ENCODE measurements at regions of chr1 and their contacts with region 1.

Region 1: GRCh38 chr1:23959041-23959460 is 577 bp upstream of the PNRC2 start:
- DNase-seq: peak; percentile 97
- ATAC-seq: peak; percentile 83
- H3K4me3 Mint-ChIP-seq: peak overlapping the region; percentile 100
- H3K27ac Mint-ChIP-seq: peak overlapping the region; percentile 100
- H3K4me1 Mint-ChIP-seq: peaks cover 66% of the 10 kb centered on the region
- H3K27me3 Mint-ChIP-seq: no peaks in the 10 kb centered on the region

Region 2: GRCh38 chr1:23743287-23744052 is 215.6 kb before region 1 on chr1 and contains the start of gene ELOA:
- CTCF ChIA-PET with region 1: no interaction called
- POLR2A ChIA-PET with region 1: interaction called, 10 read pairs
- DNase-seq: peak; percentile 85
- ATAC-seq: peak; percentile 94
- H3K4me3 Mint-ChIP-seq: peak within 1 kb of the TSS; percentile 93
- H3K27ac Mint-ChIP-seq: peak within 1 kb of the TSS; percentile 90
- H3K4me1 Mint-ChIP-seq: peaks cover 45% of the 10 kb centered on the region
- H3K27me3 Mint-ChIP-seq: no peaks in the 10 kb centered on the region
- total RNA-seq, gene ELOA: 29.2 to 31.0 TPM

Region 3: DNA sequence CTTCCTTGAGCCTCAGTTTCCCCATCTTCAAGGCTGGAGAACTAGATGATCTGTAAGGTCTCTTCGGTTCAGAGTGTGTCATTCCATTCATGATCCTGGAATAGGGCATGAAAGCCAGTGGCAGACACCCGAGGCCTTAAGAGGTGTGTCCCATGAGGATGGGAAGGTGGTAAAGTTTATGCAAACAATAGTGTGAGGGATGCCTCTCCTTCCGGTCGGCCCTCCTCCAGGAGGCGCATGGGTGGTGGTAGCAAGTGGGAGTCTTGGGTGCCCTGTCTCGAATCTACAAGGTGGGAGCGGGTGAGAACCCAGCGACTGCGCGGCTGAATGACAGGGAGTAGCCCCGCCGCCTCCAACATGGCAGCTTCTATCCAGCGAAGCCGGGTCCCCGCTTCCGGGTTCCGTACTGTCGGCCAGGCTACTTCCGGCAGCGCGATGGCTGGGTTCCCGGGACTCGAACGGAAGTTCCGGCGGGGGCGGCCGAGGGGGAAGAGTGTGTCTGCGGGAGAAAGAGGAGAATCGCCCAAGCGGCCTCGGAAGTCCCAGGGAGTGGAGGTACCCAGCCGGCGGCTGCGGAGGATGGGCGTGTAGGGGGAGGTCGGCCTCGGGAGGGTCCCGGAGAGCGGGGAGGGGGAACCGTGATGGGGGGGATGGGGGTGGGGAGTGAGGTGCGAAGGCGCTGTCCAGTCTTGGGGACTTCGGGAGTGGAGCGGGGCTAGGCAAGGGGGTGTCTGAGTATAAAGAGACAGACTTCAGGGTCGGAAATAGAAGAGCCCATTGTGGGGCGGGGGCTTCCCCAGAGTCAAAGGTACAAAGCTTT is 168.1 kb before region 1 on chr1 and contains the start of gene LYPLA2:
- CTCF ChIA-PET with region 1: no interaction called
- POLR2A ChIA-PET with region 1: interaction called, 10 read pairs
- DNase-seq: peak; percentile 92
- ATAC-seq: peak; percentile 90
- H3K4me3 Mint-ChIP-seq: peak within 1 kb of the TSS; percentile 95
- H3K27ac Mint-ChIP-seq: peak within 1 kb of the TSS; percentile 97
- H3K4me1 Mint-ChIP-seq: peaks cover 36% of the 10 kb centered on the region
- H3K27me3 Mint-ChIP-seq: no peaks in the 10 kb centered on the region
- total RNA-seq, gene LYPLA2: 84.2 to 88.2 TPM

Region 4: DNA sequence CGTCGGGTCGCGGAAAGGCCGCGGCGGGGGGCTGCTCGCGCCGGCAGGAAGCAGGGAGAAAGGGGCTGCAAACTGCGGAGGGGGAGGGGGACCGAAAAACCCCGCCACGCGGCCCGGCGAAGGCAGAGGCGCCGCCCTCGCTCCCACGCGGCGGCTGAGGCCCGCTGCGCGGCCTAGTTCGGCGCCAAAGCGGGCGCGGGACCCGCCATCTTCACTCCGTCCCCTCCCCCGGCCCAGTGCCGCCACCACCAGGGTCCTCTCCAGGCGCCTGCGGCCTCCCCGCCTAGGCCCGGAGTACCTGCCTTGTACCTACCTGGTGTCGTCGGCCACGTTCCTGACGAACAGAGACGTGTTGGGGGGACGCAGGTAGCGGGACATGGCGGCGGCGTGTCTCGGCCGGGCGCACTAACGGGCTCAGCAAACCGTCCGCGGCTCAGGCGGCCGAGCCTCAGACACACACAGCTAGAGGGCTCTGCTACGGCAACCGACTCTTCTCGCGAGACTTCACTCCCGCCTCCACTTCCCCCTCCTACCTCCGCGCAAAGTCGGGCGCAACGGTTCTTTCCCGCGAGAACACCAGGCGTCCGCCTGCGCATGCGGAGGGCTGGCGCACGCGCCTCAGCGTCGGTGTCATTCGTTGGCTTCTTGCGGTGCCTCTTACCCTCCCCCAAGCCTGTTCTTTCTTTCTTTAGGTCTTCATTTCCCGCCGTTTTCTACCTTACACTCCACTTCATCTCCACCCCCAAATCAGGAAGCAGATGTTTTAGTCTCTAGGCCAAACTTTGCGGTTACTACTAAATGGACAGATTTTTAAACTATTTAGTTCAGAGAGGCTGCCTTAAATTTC is 21.1 kb after region 1 on chr1 and contains the start of gene SRSF10:
- CTCF ChIA-PET with region 1: interaction called, 7 read pairs
- POLR2A ChIA-PET with region 1: interaction called, 151 read pairs
- DNase-seq: peak; percentile 99
- ATAC-seq: peak; percentile 95
- H3K4me3 Mint-ChIP-seq: peak within 1 kb of the TSS; percentile 92
- H3K27ac Mint-ChIP-seq: peak within 1 kb of the TSS; percentile 98
- H3K4me1 Mint-ChIP-seq: peaks cover 41% of the 10 kb centered on the region
- H3K27me3 Mint-ChIP-seq: no peaks in the 10 kb centered on the region
- total RNA-seq, gene SRSF10: 223 to 228 TPM

Measured in activated CD8-positive, alpha-beta T cell treated with anti-CD3 and anti-CD28 coated beads, Interleukin-2, amount 10 ng/mL, durations not matched to agents 7 days and 5 days (primary cell).